GM12878 (cell line): ENCODE measurements at regions of chr9 and their contacts with region 1.

Region 1: DNA sequence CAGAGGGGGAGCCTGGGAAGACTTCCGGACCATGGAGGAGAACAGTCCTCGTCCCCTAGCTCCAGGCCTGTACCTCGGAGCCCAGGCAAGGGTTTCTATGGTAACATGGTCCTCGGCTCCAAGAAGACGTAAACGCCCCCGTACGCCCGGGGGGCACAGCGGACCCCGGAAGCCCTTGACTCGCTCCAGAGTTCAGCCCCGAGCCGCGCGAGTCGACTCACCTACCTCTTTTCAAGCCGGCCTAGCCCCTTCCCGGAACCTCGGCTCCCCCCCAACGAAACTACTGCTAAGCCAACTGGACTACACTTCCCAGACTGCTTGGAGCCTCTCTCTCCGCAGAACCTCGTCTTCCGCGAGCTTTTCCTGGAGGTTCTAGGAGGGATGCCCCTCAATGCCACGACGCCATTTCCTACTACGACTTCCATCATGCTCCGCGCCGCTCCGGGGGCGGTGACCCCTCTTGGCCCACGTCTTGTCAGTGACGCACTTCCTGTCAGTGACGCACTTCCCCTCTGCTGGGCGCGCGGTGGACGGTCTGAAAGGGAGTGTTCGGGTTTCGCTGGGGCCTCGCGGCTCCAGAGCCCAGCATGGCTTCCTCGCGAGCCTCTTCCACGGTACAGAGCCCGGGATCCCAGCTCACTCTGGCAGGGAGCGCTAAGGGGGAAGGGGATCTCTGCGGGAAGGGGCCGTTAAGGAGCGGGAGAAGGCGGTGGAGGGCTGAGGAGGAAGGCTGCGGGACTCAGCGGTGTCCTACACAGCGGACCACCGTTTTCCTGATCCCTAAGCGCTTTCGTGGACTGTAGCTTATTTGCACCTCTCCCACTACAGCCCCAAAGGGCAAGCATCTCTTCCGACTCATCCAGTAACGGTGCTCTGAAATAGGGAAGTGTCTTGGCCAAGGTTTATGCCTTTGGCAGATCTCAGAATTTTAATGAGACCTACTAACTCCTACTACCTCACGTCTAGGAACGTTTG is at the starts of genes CDC26 and PRPF4:
- DNase-seq: peak; percentile 87
- ATAC-seq: peak; percentile 94
- H3K4me3 ChIP-seq: peak within 1 kb of the TSS; percentile 75
- H3K27ac ChIP-seq: peak within 1 kb of the TSS; percentile 89
- H3K4me1 ChIP-seq: peaks cover 8% of the 10 kb centered on the region; the same call in 1 of the 2 replicates
- H3K27me3 ChIP-seq: no peaks in the 10 kb centered on the region
- CTCF ChIP-seq: no peak
- EP300 ChIP-seq: no peak
- POLR2A ChIP-seq: peak; percentile 100
- RAD21 ChIP-seq: no peak
- polyA plus RNA-seq, gene CDC26: 140 to 156 TPM
- polyA plus RNA-seq, gene PRPF4: 23.0 to 43.5 TPM

Region 2: DNA sequence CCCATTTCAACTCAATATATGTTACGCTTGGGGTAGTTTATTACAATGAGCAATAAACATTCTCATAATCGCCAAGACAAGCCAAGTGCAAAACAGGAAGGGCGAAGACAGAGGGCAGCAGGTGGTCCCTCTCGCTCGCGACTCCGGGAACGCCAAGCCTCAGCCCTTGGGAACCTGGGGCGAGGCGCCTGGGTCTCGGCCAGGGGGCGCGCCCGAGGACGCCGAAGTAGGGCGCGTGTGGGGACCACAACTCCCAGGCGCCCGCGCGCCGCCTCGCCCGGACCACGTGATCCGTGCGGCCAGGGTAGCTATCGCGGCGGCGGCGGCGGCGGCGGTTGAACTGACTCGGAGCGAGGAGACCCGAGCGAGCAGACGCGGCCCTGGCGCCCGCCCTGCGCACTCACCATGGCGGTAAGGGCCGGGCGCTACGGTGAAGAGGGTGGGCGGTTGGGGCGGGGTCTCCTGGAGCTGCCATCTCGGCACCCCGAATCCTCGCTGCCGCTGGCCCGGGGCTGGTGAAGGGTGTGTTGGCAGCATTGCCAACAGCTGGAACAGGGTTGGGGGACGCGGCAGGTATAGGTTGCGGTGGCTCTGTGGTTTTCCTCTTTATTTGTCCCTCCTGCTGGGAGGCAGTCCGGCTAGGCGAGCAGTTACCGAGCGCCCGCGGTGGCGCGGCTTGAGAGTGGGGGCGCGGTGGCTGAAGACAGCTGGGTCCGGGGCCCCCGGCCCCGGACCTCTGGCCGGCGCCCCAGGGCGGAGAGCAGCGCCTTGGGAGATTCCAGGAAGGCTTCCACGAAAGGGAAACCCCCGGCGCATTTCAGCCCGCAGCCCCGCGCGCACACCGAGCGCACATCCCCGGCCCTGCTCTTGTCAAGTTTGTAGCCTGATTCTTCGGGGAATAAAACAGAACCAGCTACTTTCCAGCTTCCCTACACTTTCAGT is 124.5 kb before region 1 on chr9 and contains the start of gene SLC31A2:
- CTCF ChIA-PET with region 1: interaction called, 16 read pairs
- POLR2A ChIA-PET with region 1: no interaction called
- RAD21 ChIA-PET with region 1: interaction called, 3 read pairs
- SMC1A ChIA-PET with region 1: interaction called, 4 read pairs
- in situ Hi-C with region 1: no loop called
- intact Hi-C with region 1: no loop called
- DNase-seq: peak; percentile 7
- ATAC-seq: peak; percentile 98
- H3K4me3 ChIP-seq: peak within 1 kb of the TSS; percentile 67
- H3K27ac ChIP-seq: no peak within 1 kb of the TSS
- H3K4me1 ChIP-seq: no peaks in the 10 kb centered on the region
- H3K27me3 ChIP-seq: no peaks in the 10 kb centered on the region
- CTCF ChIP-seq: peak; percentile 32 to 49 (median 35); a peak in 4 of 6 replicates
- EP300 ChIP-seq: no peak
- POLR2A ChIP-seq: peak; percentile 75
- RAD21 ChIP-seq: no peak
- polyA plus RNA-seq, gene SLC31A2: 0.09 to 1.0 TPM

Region 3: GRCh38 chr9:113299800-113300292 is 24.4 kb after region 1 on chr9:
- CTCF ChIA-PET with region 1: no interaction called
- POLR2A ChIA-PET with region 1: interaction called, 12 read pairs
- RAD21 ChIA-PET with region 1: no interaction called
- SMC1A ChIA-PET with region 1: interaction called, 3 read pairs
- in situ Hi-C with region 1: no loop called
- intact Hi-C with region 1: no loop called
- DNase-seq: no peak
- ATAC-seq: no peak
- H3K4me3 ChIP-seq: no peak overlapping the region
- H3K27ac ChIP-seq: no peak overlapping the region
- H3K4me1 ChIP-seq: no peaks in the 10 kb centered on the region
- H3K27me3 ChIP-seq: no peaks in the 10 kb centered on the region; a peak in 1 of 4 replicates
- CTCF ChIP-seq: no peak
- EP300 ChIP-seq: no peak
- POLR2A ChIP-seq: no peak
- RAD21 ChIP-seq: no peak

Region 4: GRCh38 chr9:113401027-113401792 is 125.8 kb after region 1 on chr9 and contains the start of gene ALAD:
- CTCF ChIA-PET with region 1: interaction called, 96 read pairs
- POLR2A ChIA-PET with region 1: interaction called, 8 read pairs
- RAD21 ChIA-PET with region 1: interaction called, 15 read pairs
- SMC1A ChIA-PET with region 1: interaction called, 46 read pairs
- in situ Hi-C with region 1: loop called (anchors 5 kb)
- intact Hi-C with region 1: no loop called
- DNase-seq: peak; percentile 87
- ATAC-seq: peak; percentile 100
- H3K4me3 ChIP-seq: peak within 1 kb of the TSS; percentile 86
- H3K27ac ChIP-seq: no peak within 1 kb of the TSS
- H3K4me1 ChIP-seq: no peaks in the 10 kb centered on the region
- H3K27me3 ChIP-seq: no peaks in the 10 kb centered on the region
- CTCF ChIP-seq: peak; percentile 95 to 99 (median 96)
- EP300 ChIP-seq: no peak
- POLR2A ChIP-seq: peak; percentile 80
- RAD21 ChIP-seq: peak; percentile 68
- polyA plus RNA-seq, gene ALAD: 2.4 to 3.9 TPM

Region 5: DNA sequence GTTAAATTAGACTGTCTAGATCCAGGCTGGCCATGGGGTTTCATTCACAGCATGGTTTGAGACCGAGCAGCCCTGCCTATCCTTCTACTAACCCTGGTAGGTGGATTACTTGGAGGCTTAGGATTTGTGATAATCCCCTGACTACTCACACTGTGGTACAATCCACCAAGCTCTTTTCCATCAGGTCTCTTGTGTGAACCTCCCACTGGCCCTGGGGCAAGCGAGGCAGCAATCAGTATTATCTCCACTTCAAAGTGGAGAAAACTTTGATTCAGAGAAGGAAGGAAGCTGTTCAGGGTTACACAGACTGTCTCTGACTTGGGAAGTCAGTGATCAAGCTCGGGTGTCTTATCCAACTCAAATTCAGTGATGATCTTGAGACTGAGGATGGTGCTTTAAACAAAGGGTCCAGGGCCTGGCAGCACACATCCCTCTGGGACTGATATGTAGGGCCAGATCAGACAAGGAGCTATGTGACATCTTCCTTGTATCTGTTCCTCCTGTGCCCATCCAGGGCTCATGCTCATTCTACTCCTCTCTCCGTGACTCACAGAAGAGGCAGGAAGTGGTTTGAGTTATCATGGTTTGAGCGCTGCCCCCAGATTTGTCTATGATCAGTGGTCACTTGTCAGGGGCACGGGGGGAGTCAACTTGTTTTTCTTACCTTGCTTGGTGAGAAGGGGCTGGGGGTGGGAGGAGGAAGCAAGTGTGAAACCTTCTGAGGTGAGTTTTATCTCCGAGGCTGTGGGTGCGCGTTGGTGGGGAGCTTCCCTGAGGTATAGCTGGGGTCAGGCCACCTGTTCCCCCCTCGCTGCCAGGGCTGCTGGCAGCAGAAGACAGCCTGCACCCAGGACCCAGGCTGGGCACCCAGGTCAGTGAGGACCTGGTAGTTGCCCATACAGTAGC is 236.7 kb after region 1 on chr9:
- CTCF ChIA-PET with region 1: no interaction called
- POLR2A ChIA-PET with region 1: interaction called, 3 read pairs
- RAD21 ChIA-PET with region 1: interaction called, 4 read pairs
- SMC1A ChIA-PET with region 1: no interaction called
- in situ Hi-C with region 1: no loop called
- intact Hi-C with region 1: loop called (anchors 2 kb)
- DNase-seq: peak; percentile 81
- ATAC-seq: peak; percentile 74
- H3K4me3 ChIP-seq: peak overlapping the region; percentile 42; the same call in 1 of the 2 replicates
- H3K27ac ChIP-seq: peak overlapping the region; percentile 68
- H3K4me1 ChIP-seq: peaks cover 41% of the 10 kb centered on the region
- H3K27me3 ChIP-seq: no peaks in the 10 kb centered on the region
- CTCF ChIP-seq: no peak
- EP300 ChIP-seq: peak; percentile 7 to 84; a peak in 2 of 4 replicates
- POLR2A ChIP-seq: no peak
- RAD21 ChIP-seq: no peak

Region 6: DNA sequence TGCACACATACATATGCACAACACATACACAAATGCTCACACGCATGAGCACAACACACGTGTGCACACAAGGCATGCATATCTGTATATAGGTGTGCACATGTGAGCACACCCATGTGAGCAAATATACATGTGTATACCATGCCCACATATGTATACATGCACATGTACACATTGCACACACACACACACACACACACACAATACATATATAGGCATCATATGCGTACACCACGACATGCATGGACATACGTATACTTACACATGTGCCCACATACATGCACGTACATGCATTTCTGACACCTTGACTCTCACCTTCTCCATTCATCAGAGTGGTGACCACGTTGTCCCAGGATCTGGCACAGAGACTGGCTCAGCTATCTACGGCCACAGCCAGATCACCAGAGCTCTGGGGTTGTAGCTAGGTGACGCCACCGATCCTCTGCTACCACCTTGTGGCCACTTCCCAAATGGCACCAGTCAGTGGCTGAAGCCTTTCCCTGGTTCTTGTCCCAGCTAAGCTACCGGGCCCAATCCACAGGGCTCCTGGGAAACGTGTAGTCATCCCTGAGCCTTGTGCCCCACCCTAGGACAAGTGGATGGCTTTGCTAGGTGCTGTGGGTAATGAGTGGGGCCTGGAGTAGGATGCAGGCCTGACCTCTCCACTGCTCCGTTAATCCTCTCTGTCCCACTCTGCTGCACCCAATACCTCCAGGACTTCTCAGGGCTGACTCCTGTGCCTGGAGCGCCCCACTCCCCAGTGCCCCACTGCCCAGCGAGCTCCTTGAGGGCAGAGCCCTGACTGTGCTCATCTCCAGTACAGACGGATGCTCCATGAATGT is 382.5 kb after region 1 on chr9:
- CTCF ChIA-PET with region 1: interaction called, 117 read pairs
- POLR2A ChIA-PET with region 1: interaction called, 3 read pairs
- RAD21 ChIA-PET with region 1: interaction called, 63 read pairs
- SMC1A ChIA-PET with region 1: interaction called, 50 read pairs
- in situ Hi-C with region 1: loop called (anchors 5 kb)
- intact Hi-C with region 1: loop called (anchors 1 kb)
- DNase-seq: peak; percentile 39
- ATAC-seq: peak; percentile 96
- H3K4me3 ChIP-seq: no peak overlapping the region
- H3K27ac ChIP-seq: no peak overlapping the region
- H3K4me1 ChIP-seq: no peaks in the 10 kb centered on the region
- H3K27me3 ChIP-seq: 0 out of 4 replicates have a peak, but pooled peaks cover 0 to 1% of the 10 kb centered on the region in 2 experiments
- CTCF ChIP-seq: peak; percentile 95 to 98 (median 96)
- EP300 ChIP-seq: no peak
- POLR2A ChIP-seq: no peak
- RAD21 ChIP-seq: peak; percentile 95

Region 7: GRCh38 chr9:114004221-114004716 is 728.8 kb after region 1 on chr9:
- CTCF ChIA-PET with region 1: no interaction called
- POLR2A ChIA-PET with region 1: no interaction called
- RAD21 ChIA-PET with region 1: no interaction called
- SMC1A ChIA-PET with region 1: no interaction called
- in situ Hi-C with region 1: no loop called
- intact Hi-C with region 1: no loop called
- DNase-seq: no peak
- ATAC-seq: no peak
- H3K4me3 ChIP-seq: no peak overlapping the region
- H3K27ac ChIP-seq: no peak overlapping the region
- H3K4me1 ChIP-seq: no peaks in the 10 kb centered on the region; the same call in 1 of the 2 replicates
- H3K27me3 ChIP-seq: no peaks in the 10 kb centered on the region; a peak in 2 of 4 replicates
- CTCF ChIP-seq: no peak
- EP300 ChIP-seq: no peak
- POLR2A ChIP-seq: no peak
- RAD21 ChIP-seq: no peak